SK-N-SH (cell line): ENCODE measurements at regions of chr1 and their contacts with region 1.

Region 1: GRCh38 chr1:2381741-2382620 is 9.4 kb downstream of the MORN1 start:
- DNase-seq: peak; percentile 98
- H3K4me3 ChIP-seq: no peak overlapping the region; a peak in 1 of 4 replicates
- H3K27ac ChIP-seq: peak overlapping the region in 1 of 2 experiments; percentile 28; a peak in 1 of 4 replicates
- H3K4me1 ChIP-seq: peaks cover 0 to 6% of the 10 kb centered on the region in 2 experiments; a peak in 1 of 4 replicates
- H3K27me3 ChIP-seq: no peaks in the 10 kb centered on the region
- CTCF ChIP-seq: peak; percentile 76
- EP300 ChIP-seq: no peak
- RAD21 ChIP-seq: peak; percentile 87

Region 2: DNA sequence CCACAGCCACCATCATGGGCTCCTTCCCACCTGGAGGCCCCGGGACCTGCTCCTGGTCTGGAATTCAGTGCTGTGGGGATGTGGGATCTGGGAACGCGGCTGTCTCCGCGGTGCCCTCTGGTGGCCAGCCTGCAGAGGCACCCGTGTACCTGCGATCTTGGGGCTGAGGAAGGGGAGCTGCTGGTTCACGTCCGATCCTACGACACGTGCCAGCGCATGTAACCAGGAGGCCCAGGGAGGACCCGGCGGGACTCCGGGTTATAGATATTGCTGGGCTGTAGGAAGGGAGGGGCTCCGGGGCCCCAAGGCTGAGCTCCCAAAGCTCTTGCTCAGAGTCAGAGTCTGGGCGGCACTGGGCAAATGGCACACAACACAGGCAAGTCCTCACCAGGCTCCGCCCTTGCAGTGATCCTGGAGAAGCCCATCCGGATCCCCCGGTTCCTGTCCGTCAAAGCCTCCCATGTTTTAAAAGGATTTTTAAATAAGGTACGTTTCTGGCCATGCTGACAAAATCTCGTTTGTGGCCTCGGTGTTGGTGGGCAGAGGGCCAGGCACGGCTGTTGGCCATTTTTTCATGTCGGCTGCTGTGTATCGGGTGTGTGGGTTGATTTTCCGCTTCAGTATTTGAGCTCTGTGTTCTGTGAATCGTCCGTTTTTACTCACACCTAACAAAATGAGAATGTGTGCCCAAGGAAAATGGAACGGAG is 207.5 kb before region 1 on chr1:
- CTCF ChIA-PET with region 1: interaction called, 20 read pairs
- POLR2A ChIA-PET with region 1: no interaction called
- DNase-seq: peak; percentile 94
- H3K4me3 ChIP-seq: no peak overlapping the region
- H3K27ac ChIP-seq: no peak overlapping the region
- H3K4me1 ChIP-seq: peaks cover 0 to 2% of the 10 kb centered on the region in 2 experiments; a peak in 1 of 4 replicates
- H3K27me3 ChIP-seq: no peaks in the 10 kb centered on the region
- CTCF ChIP-seq: peak; percentile 80
- EP300 ChIP-seq: no peak
- RAD21 ChIP-seq: peak; percentile 62

Region 3: GRCh38 chr1:2194898-2195673 is 186.9 kb before region 1 on chr1:
- CTCF ChIA-PET with region 1: interaction called, 292 read pairs
- POLR2A ChIA-PET with region 1: interaction called, 35 read pairs
- DNase-seq: peak; percentile 96
- H3K4me3 ChIP-seq: peak overlapping the region; percentile 68 to 73
- H3K27ac ChIP-seq: peak overlapping the region; percentile 85 to 94
- H3K4me1 ChIP-seq: peaks cover 0 to 41% of the 10 kb centered on the region in 2 experiments; a peak in 1 of 4 replicates
- H3K27me3 ChIP-seq: no peaks in the 10 kb centered on the region
- CTCF ChIP-seq: peak; percentile 87
- EP300 ChIP-seq: no peak
- RAD21 ChIP-seq: peak; percentile 94

Region 4: DNA sequence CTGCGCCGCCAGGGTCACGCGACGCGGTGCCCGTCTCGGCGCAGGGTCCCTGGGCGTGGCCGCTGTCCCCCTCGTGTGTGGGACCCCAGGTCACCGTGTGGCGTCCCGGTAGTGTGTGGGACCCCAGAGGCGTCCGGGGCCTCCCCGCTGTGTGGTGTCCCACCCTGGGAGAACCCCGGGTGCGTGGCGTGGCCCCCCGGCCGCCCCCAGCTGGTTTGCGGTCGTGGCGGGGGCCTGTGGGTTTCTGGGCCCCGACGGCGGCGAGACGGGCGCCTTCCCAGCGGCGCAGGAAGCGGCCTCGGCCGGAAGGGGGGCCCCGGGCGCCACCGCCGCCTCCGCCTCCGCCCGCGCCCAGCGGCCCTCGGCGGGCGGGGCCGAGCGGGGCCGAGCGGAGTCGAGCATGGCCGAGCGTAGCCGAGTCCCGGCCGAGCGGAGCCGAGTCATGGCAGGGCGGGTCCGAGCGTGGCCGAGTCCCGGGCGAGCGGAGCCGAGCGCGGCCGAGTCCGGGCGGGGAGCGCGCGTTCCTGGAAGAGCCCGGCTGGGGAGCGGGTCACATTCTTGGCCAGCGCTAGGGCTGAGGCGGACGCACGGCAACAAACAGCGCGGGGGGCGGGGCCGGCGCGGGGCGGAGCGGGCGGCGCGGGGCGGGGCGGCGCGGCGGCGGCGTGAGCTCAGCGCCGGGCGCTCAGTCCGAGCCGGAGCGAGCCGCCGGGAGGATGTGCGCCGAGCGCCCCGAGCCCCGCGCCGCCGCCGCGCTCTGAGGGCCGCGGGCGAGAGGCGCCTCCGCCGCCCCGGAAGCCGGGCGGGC is 154.4 kb before region 1 on chr1:
- CTCF ChIA-PET with region 1: interaction called, 47 read pairs
- POLR2A ChIA-PET with region 1: no interaction called
- DNase-seq: peak; percentile 100
- H3K4me3 ChIP-seq: peak overlapping the region; percentile 68 to 80
- H3K27ac ChIP-seq: peak overlapping the region; percentile 80 to 94
- H3K4me1 ChIP-seq: peaks cover 0 to 37% of the 10 kb centered on the region in 2 experiments; a peak in 2 of 4 replicates
- H3K27me3 ChIP-seq: no peaks in the 10 kb centered on the region
- CTCF ChIP-seq: no peak
- EP300 ChIP-seq: no peak
- RAD21 ChIP-seq: no peak

Region 5: GRCh38 chr1:2314803-2315673 is 66.9 kb before region 1 on chr1:
- CTCF ChIA-PET with region 1: interaction called, 34 read pairs
- POLR2A ChIA-PET with region 1: no interaction called
- DNase-seq: peak; percentile 97
- H3K4me3 ChIP-seq: peak overlapping the region; percentile 50 to 51; a peak in 3 of 4 replicates
- H3K27ac ChIP-seq: peak overlapping the region in 1 of 2 experiments; percentile 83; a peak in 2 of 4 replicates
- H3K4me1 ChIP-seq: peaks cover 0 to 49% of the 10 kb centered on the region in 2 experiments; a peak in 1 of 4 replicates
- H3K27me3 ChIP-seq: no peaks in the 10 kb centered on the region
- CTCF ChIP-seq: peak; percentile 56
- EP300 ChIP-seq: no peak
- RAD21 ChIP-seq: no peak

Region 6: GRCh38 chr1:2350911-2351655 is 30.9 kb before region 1 on chr1:
- CTCF ChIA-PET with region 1: interaction called, 12 read pairs
- POLR2A ChIA-PET with region 1: no interaction called
- DNase-seq: no peak
- H3K4me3 ChIP-seq: no peak overlapping the region
- H3K27ac ChIP-seq: no peak overlapping the region
- H3K4me1 ChIP-seq: peaks cover 0 to 3% of the 10 kb centered on the region in 2 experiments; a peak in 1 of 4 replicates
- H3K27me3 ChIP-seq: no peaks in the 10 kb centered on the region
- CTCF ChIP-seq: no peak
- EP300 ChIP-seq: no peak
- RAD21 ChIP-seq: no peak

Region 7: DNA sequence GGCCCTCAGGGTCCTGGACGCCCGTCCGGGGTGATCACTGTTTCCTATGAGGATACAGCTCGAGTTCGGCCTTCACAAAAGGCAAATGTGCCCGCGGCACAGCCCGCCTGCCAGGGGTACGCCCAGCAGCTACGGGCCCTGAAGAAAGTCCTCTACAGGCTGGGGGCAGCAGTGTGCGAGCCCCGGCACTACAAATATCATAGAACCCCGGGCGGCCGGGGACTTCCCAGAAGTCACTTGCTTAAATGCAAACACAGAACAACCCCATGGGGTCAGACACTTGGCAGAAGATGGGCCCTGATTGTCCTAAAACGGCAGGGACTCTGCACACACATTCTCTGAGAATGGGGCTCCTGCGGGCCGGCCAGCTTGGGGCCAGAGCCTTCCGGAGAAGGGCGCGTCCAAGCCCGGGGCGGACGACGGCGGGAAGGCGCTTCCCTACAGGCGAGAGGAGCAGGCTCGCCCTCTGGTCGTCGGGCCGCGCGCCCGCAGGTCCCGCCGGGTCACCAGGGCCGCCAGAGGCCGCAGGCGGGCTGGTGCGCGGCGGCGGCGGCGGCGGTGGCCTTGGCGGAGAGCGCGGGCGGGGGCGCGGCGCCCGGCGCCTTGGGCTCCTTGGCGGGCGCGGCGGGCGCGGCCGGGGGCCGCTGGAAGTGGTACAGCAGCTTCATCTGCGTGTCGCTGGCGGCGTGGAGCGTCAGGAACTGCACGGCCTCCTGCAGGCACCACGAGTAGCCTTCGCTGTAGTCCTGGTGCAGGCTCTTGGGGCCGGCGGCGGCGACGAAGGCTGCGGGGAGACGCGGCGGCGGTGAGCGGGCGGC is 147.2 kb after region 1 on chr1:
- CTCF ChIA-PET with region 1: no interaction called
- POLR2A ChIA-PET with region 1: no interaction called
- DNase-seq: peak; percentile 71
- H3K4me3 ChIP-seq: no peak overlapping the region
- H3K27ac ChIP-seq: no peak overlapping the region
- H3K4me1 ChIP-seq: peaks cover 0 to 41% of the 10 kb centered on the region in 2 experiments; a peak in 3 of 4 replicates
- H3K27me3 ChIP-seq: peaks cover 6% of the 10 kb centered on the region; the same call in 1 of the 2 replicates
- CTCF ChIP-seq: no peak
- EP300 ChIP-seq: no peak
- RAD21 ChIP-seq: no peak